ENCODE measurements at regions of chr14 and their contacts with region 1.

Region 1: GRCh38 chr14:103897075-103897947 is 30.9 kb upstream of the TDRD9 start:
- DNase-seq: no peak
- H3K4me3 ChIP-seq: no peak overlapping the region
- H3K27ac ChIP-seq: no peak overlapping the region
- H3K4me1 ChIP-seq: no peaks in the 10 kb centered on the region
- H3K27me3 ChIP-seq: no peaks in the 10 kb centered on the region
- CTCF ChIP-seq: no peak
- EP300 ChIP-seq: no peak
- POLR2A ChIP-seq: no peak
- RAD21 ChIP-seq: no peak

Region 2: GRCh38 chr14:103819503-103820307 is 77.6 kb before region 1 on chr14:
- CTCF ChIA-PET with region 1: interaction called, 24 read pairs
- POLR2A ChIA-PET with region 1: no interaction called
- DNase-seq: peak; percentile 27 to 52
- H3K4me3 ChIP-seq: peak overlapping the region in 1 of 4 experiments; percentile 36; a peak in 2 of 8 replicates
- H3K27ac ChIP-seq: no peak overlapping the region
- H3K4me1 ChIP-seq: peaks cover 0 to 5% (median under 1%) of the 10 kb centered on the region in 4 experiments; a peak in 4 of 7 replicates
- H3K27me3 ChIP-seq: no peaks in the 10 kb centered on the region
- CTCF ChIP-seq: no peak
- EP300 ChIP-seq: no peak
- POLR2A ChIP-seq: no peak
- RAD21 ChIP-seq: no peak; a peak in 1 of 4 replicates

Region 3: GRCh38 chr14:103855063-103855733 is 42.1 kb before region 1 on chr14:
- CTCF ChIA-PET with region 1: interaction called, 23 read pairs
- POLR2A ChIA-PET with region 1: no interaction called
- DNase-seq: peak in 1 of 2 experiments; percentile 78
- H3K4me3 ChIP-seq: peak overlapping the region in 2 of 4 experiments; percentile 10 to 45; a peak in 4 of 8 replicates
- H3K27ac ChIP-seq: no peak overlapping the region
- H3K4me1 ChIP-seq: peaks cover 0 to 25% (median 21%) of the 10 kb centered on the region in 4 experiments; a peak in 6 of 7 replicates
- H3K27me3 ChIP-seq: no peaks in the 10 kb centered on the region
- CTCF ChIP-seq: peak in 1 of 3 experiments; percentile 14; a peak in 1 of 4 replicates
- EP300 ChIP-seq: no peak
- POLR2A ChIP-seq: no peak
- RAD21 ChIP-seq: no peak

Region 4: DNA sequence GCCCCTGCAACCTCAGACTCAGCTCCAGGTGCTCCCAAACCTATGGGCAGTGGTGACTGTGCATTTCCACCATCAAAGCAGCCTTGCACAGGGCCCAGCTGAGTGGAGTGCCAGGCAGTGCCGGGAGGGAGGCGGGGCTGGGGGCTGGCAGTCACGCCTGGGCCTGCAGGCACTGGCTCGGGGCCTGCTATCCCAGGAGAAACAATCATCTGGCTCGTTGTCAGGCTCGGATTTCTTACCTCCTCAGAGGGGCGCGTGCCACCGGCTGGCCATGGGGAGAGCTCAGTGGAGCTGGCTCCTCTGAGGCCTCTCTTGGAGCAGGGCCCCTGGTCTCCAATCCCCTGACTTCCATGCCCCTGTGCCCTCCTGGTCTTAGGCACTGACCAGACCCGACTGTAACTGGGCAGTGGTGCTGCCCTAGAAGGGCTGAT is 29.8 kb before region 1 on chr14:
- CTCF ChIA-PET with region 1: interaction called, 16 read pairs
- POLR2A ChIA-PET with region 1: no interaction called
- DNase-seq: peak in 1 of 2 experiments; percentile 50
- H3K4me3 ChIP-seq: no peak overlapping the region
- H3K27ac ChIP-seq: no peak overlapping the region
- H3K4me1 ChIP-seq: peaks cover under 1 to 10% (median 7%) of the 10 kb centered on the region in 4 experiments
- H3K27me3 ChIP-seq: no peaks in the 10 kb centered on the region; a peak in 1 of 7 replicates
- CTCF ChIP-seq: no peak
- EP300 ChIP-seq: no peak
- POLR2A ChIP-seq: no peak
- RAD21 ChIP-seq: no peak

Region 5: GRCh38 chr14:103910262-103910935 is 13.1 kb after region 1 on chr14:
- CTCF ChIA-PET with region 1: interaction called, 56 read pairs
- POLR2A ChIA-PET with region 1: interaction called, 6 read pairs
- DNase-seq: peak; percentile 76 to 85
- H3K4me3 ChIP-seq: peak overlapping the region in 1 of 4 experiments; percentile 23; a peak in 2 of 8 replicates
- H3K27ac ChIP-seq: no peak overlapping the region
- H3K4me1 ChIP-seq: peaks cover 0 to 5% (median 3%) of the 10 kb centered on the region in 4 experiments; a peak in 5 of 7 replicates
- H3K27me3 ChIP-seq: no peaks in the 10 kb centered on the region
- CTCF ChIP-seq: peak; percentile 81 to 88 (median 87)
- EP300 ChIP-seq: no peak
- POLR2A ChIP-seq: 0 out of 3 replicates have a peak, but pooled peaks of 1 of the 2 experiments have one; percentile 42
- RAD21 ChIP-seq: peak; percentile 87 to 89

Region 6: GRCh38 chr14:103920981-103921854 is 23.9 kb after region 1 on chr14:
- CTCF ChIA-PET with region 1: interaction called, 20 read pairs
- POLR2A ChIA-PET with region 1: interaction called, 3 read pairs
- DNase-seq: peak; percentile 74 to 96
- H3K4me3 ChIP-seq: peak overlapping the region; percentile 86 to 98 (median 94)
- H3K27ac ChIP-seq: peak overlapping the region; percentile 67
- H3K4me1 ChIP-seq: 0 out of 7 replicates have a peak, but pooled peaks cover 0 to 4% (median 0%) of the 10 kb centered on the region in 4 experiments
- H3K27me3 ChIP-seq: no peaks in the 10 kb centered on the region
- CTCF ChIP-seq: peak; percentile 96 to 97 (median 96)
- EP300 ChIP-seq: no peak
- POLR2A ChIP-seq: peak in 1 of 2 experiments; percentile 87; a peak in 2 of 3 replicates
- RAD21 ChIP-seq: peak; percentile 28 to 46; a peak in 3 of 4 replicates